ENCODE measurements at regions of chr19 and their contacts with region 1.

Region 1: GRCh38 chr19:41144403-41144802 is 30.2 kb downstream of the CYP2F1 start:
- DNase-seq: peak; percentile 79
- H3K4me3 ChIP-seq: no peak overlapping the region
- H3K27ac ChIP-seq: no peak overlapping the region
- H3K4me1 ChIP-seq: no peaks in the 10 kb centered on the region
- H3K27me3 ChIP-seq: no peaks in the 10 kb centered on the region
- CTCF ChIP-seq: peak; percentile 77 to 86
- POLR2A ChIP-seq: no peak

Region 2: GRCh38 chr19:40822161-40822560 is 322.2 kb before region 1 on chr19:
- CTCF ChIA-PET with region 1: no interaction called
- POLR2A ChIA-PET with region 1: no interaction called
- dilution Hi-C with region 1: no loop called
- intact Hi-C with region 1: loop called (anchors 5 kb)
- DNase-seq: no peak
- H3K4me3 ChIP-seq: no peak overlapping the region
- H3K27ac ChIP-seq: no peak overlapping the region
- H3K4me1 ChIP-seq: peaks cover 6% of the 10 kb centered on the region
- H3K27me3 ChIP-seq: no peaks in the 10 kb centered on the region
- CTCF ChIP-seq: no peak
- POLR2A ChIP-seq: no peak

Region 3: GRCh38 chr19:40974633-40975037 is 169.8 kb before region 1 on chr19:
- CTCF ChIA-PET with region 1: interaction called, 16 read pairs
- POLR2A ChIA-PET with region 1: no interaction called
- dilution Hi-C with region 1: no loop called
- intact Hi-C with region 1: loop called (anchors 1 kb)
- DNase-seq: peak; percentile 61
- H3K4me3 ChIP-seq: no peak overlapping the region
- H3K27ac ChIP-seq: no peak overlapping the region
- H3K4me1 ChIP-seq: no peaks in the 10 kb centered on the region
- H3K27me3 ChIP-seq: peaks cover 0 to 4% of the 10 kb centered on the region in 2 experiments
- CTCF ChIP-seq: peak; percentile 71 to 86
- POLR2A ChIP-seq: no peak

Region 4: GRCh38 chr19:41123716-41124294 is 20.6 kb before region 1 on chr19:
- CTCF ChIA-PET with region 1: interaction called, 31 read pairs
- POLR2A ChIA-PET with region 1: no interaction called
- dilution Hi-C with region 1: no loop called
- intact Hi-C with region 1: loop called (anchors 1 kb)
- DNase-seq: no peak
- H3K4me3 ChIP-seq: no peak overlapping the region
- H3K27ac ChIP-seq: no peak overlapping the region
- H3K4me1 ChIP-seq: no peaks in the 10 kb centered on the region
- H3K27me3 ChIP-seq: peaks cover 0 to under 1% of the 10 kb centered on the region in 2 experiments
- CTCF ChIP-seq: no peak
- POLR2A ChIP-seq: no peak

Region 5: GRCh38 chr19:41156207-41156606 is 11.8 kb after region 1 on chr19:
- CTCF ChIA-PET with region 1: interaction called, 11 read pairs
- POLR2A ChIA-PET with region 1: no interaction called
- dilution Hi-C with region 1: no loop called
- intact Hi-C with region 1: no loop called
- DNase-seq: no peak
- H3K4me3 ChIP-seq: no peak overlapping the region
- H3K27ac ChIP-seq: no peak overlapping the region
- H3K4me1 ChIP-seq: no peaks in the 10 kb centered on the region
- H3K27me3 ChIP-seq: peaks cover 0 to 2% of the 10 kb centered on the region in 2 experiments
- CTCF ChIP-seq: no peak
- POLR2A ChIP-seq: no peak